ENCODE measurements at regions of chr14 and their contacts with region 1.

Region 1: DNA sequence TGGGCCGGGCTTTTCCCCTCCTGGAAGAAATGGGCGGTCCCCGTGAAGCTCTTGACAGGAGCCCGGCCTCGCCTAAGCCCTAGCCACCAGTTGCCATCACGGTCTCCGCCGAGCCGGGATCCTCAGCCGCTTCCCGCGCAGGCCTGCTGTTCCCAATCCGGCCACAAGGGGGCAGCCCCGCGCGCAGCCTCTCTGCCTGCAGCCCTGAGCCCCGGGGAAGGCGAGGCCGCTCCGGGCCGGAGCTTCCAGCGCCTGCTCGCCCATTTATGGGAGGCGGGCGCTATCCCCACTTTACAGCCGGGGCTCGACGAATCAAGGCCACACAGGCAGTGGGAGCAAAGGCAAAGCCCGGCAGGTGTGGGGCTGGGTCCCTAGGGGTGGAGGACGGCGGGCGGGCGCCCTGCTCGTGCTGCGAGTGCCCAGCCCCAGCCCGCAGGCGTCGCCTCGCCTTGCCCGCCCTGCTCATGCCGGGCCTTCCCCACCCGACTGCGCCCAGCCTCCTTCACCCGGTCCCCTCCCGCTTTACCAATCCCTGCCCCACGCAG is 61.5 kb downstream of the LGMN start:
- DNase-seq: peak; percentile 71
- H3K4me3 ChIP-seq: peak overlapping the region in 1 of 3 experiments; percentile 33
- H3K27ac ChIP-seq: no peak overlapping the region
- H3K4me1 ChIP-seq: no peaks in the 10 kb centered on the region
- H3K27me3 ChIP-seq: no peaks in the 10 kb centered on the region
- CTCF ChIP-seq: peak; percentile 98 to 99
- POLR2A ChIP-seq: no peak

Region 2: GRCh38 chr14:92121670-92122350 is 565.2 kb before region 1 on chr14 and contains the starts of genes CPSF2 and NDUFB1:
- CTCF ChIA-PET with region 1: interaction called, 6 read pairs
- POLR2A ChIA-PET with region 1: no interaction called
- dilution Hi-C with region 1: no loop called
- intact Hi-C with region 1: loop called (anchors 5 kb)
- DNase-seq: peak; percentile 84
- H3K4me3 ChIP-seq: peak within 1 kb of the TSS; percentile 40 to 89 (median 79)
- H3K27ac ChIP-seq: peak within 1 kb of the TSS; percentile 75
- H3K4me1 ChIP-seq: peaks cover 7% of the 10 kb centered on the region
- H3K27me3 ChIP-seq: no peaks in the 10 kb centered on the region
- CTCF ChIP-seq: no peak
- POLR2A ChIP-seq: peak; percentile 95
- total RNA-seq, gene CPSF2: 76.9 and 81.7 TPM in 2 replicates
- total RNA-seq, gene NDUFB1: 95.2 and 114 TPM in 2 replicates

Region 3: GRCh38 chr14:92323011-92323915 is 363.7 kb before region 1 on chr14 and contains the start of gene SLC24A4:
- CTCF ChIA-PET with region 1: no interaction called
- POLR2A ChIA-PET with region 1: no interaction called
- dilution Hi-C with region 1: no loop called
- intact Hi-C with region 1: loop called (anchors 10 kb)
- DNase-seq: no peak
- H3K4me3 ChIP-seq: no peak within 1 kb of the TSS
- H3K27ac ChIP-seq: no peak within 1 kb of the TSS
- H3K4me1 ChIP-seq: no peaks in the 10 kb centered on the region
- H3K27me3 ChIP-seq: peaks cover 40 to 41% of the 10 kb centered on the region in 2 experiments
- CTCF ChIP-seq: no peak
- POLR2A ChIP-seq: no peak
- total RNA-seq, gene SLC24A4: 0.07 and 0.14 TPM in 2 replicates

Region 4: DNA sequence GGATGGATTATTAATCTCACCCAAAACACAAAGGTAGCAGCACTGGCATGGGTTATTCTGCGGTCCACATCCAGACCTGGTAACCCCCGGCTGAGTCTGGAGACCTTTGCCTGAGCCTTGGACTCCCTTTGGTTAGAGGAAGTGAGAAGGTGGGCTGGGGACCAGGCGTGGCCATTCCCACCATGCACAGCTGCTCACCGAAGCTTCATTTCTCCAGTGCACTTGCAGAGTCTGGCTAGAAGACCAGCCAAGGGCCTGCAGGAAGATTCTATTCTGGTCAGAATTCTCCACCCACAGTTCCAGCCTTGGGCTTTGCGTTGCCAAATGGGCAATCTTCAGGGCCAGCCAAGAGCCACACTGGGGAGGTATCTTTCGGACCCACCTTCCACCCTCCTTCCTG is 11.6 kb before region 1 on chr14:
- CTCF ChIA-PET with region 1: interaction called, 18 read pairs
- POLR2A ChIA-PET with region 1: no interaction called
- dilution Hi-C with region 1: no loop called
- intact Hi-C with region 1: no loop called
- DNase-seq: no peak
- H3K4me3 ChIP-seq: no peak overlapping the region
- H3K27ac ChIP-seq: no peak overlapping the region
- H3K4me1 ChIP-seq: no peaks in the 10 kb centered on the region
- H3K27me3 ChIP-seq: no peaks in the 10 kb centered on the region
- CTCF ChIP-seq: no peak
- POLR2A ChIP-seq: no peak

Region 5: DNA sequence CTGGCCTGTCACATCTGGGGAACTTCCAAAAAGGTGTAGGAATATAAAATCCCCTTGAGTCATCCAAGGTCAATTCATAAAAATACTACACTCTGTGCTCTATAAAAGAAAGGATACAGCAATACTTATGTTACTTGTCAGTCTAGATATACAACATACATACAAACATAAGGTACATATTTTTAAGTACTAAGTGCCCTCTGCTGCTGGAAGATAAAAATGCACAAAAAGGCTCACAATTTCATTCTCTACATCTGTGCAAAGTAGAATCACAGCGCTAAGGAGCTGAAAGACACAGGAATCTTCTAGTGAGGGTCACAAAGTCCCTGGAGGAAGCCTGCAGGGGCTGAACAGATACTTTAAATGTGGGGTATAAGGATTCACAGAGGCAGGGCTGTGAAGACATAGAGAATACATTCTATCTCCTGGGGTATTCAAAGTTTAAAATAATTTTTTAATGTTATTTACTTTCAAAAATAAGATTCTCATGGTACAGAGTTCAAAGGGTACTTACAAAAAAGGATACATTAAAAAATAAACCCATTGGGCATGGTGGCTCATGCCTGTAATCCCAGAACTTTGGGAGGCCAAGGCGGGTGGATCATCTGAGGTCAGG is 97.0 kb after region 1 on chr14:
- CTCF ChIA-PET with region 1: interaction called, 118 read pairs
- POLR2A ChIA-PET with region 1: no interaction called
- dilution Hi-C with region 1: no loop called
- intact Hi-C with region 1: loop called (anchors 1 kb)
- DNase-seq: peak; percentile 81
- H3K4me3 ChIP-seq: no peak overlapping the region
- H3K27ac ChIP-seq: no peak overlapping the region
- H3K4me1 ChIP-seq: no peaks in the 10 kb centered on the region
- H3K27me3 ChIP-seq: no peaks in the 10 kb centered on the region
- CTCF ChIP-seq: peak; percentile 26 to 32
- POLR2A ChIP-seq: no peak

Region 6: GRCh38 chr14:93676419-93676958 is 989.5 kb after region 1 on chr14:
- CTCF ChIA-PET with region 1: no interaction called
- POLR2A ChIA-PET with region 1: no interaction called
- dilution Hi-C with region 1: no loop called
- intact Hi-C with region 1: no loop called
- DNase-seq: no peak
- H3K4me3 ChIP-seq: no peak overlapping the region
- H3K27ac ChIP-seq: no peak overlapping the region
- H3K4me1 ChIP-seq: no peaks in the 10 kb centered on the region
- H3K27me3 ChIP-seq: no peaks in the 10 kb centered on the region
- CTCF ChIP-seq: no peak
- POLR2A ChIP-seq: no peak

Measured in endothelial cell of umbilical vein (primary cell).